Calu3 (cell line): ENCODE measurements at regions of chr2 and their contacts with region 1.

Region 1: GRCh38 chr2:156332534-156333273 is at the start of gene NR4A2:
- DNase-seq: peak; percentile 89
- H3K4me3 Mint-ChIP-seq: peak within 1 kb of the TSS; percentile 92
- H3K27ac Mint-ChIP-seq: peak within 1 kb of the TSS; percentile 97
- H3K4me1 Mint-ChIP-seq: peaks cover 9% of the 10 kb centered on the region
- H3K27me3 Mint-ChIP-seq: no peaks in the 10 kb centered on the region
- CTCF ChIP-seq: no peak
- total RNA-seq, gene NR4A2: 4.9 and 6.2 TPM in 2 replicates

Region 2: GRCh38 chr2:155708071-155708470 is 624.6 kb before region 1 on chr2:
- CTCF ChIA-PET with region 1: no interaction called
- intact Hi-C with region 1: loop called (anchors 10 kb)
- DNase-seq: peak; percentile 3
- H3K4me3 Mint-ChIP-seq: no peak overlapping the region
- H3K27ac Mint-ChIP-seq: no peak overlapping the region
- H3K4me1 Mint-ChIP-seq: no peaks in the 10 kb centered on the region
- H3K27me3 Mint-ChIP-seq: no peaks in the 10 kb centered on the region
- CTCF ChIP-seq: no peak

Region 3: DNA sequence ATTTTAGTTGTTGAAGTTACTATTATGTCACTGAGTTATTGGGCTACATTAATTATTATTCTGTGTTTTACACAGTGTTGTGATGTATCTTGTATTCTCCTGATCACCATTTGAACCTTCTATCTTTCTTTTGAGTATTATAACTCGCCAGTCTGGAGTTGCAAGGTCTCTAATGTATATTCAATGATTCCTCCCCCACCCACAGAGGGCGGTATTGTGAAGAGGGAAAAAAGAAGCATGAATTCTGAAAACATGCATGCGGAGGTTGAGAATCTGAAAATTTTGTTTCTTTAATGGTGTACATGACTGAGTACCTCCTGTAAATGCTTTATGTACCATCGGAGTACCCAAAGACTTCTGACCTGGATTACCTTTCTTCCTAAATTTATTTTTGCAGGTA is 266.8 kb before region 1 on chr2:
- CTCF ChIA-PET with region 1: no interaction called
- intact Hi-C with region 1: loop called (anchors 5 kb)
- DNase-seq: peak; percentile 58
- H3K4me3 Mint-ChIP-seq: no peak overlapping the region
- H3K27ac Mint-ChIP-seq: no peak overlapping the region
- H3K4me1 Mint-ChIP-seq: no peaks in the 10 kb centered on the region
- H3K27me3 Mint-ChIP-seq: no peaks in the 10 kb centered on the region
- CTCF ChIP-seq: peak; percentile 36

Region 4: DNA sequence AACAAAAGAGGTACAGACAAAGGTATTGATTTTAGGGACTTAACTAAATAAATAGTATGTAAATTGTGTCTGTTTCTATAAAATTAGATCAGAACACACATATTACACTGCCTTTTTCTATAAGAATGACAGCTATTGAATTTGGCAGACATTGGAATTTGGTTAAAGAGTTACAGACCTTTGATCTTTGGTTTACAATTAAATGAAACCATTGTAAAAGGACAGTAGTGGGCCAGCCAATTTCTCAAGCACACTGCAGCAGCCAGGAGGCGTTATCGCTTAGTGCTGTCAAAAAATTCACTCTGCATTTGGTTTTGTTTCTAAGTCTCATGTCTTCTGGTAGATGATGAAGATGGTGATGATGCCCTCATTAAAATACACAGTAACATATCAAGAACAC is 176.1 kb before region 1 on chr2:
- CTCF ChIA-PET with region 1: no interaction called
- intact Hi-C with region 1: loop called (anchors 5 kb)
- DNase-seq: peak; percentile 21
- H3K4me3 Mint-ChIP-seq: no peak overlapping the region
- H3K27ac Mint-ChIP-seq: no peak overlapping the region
- H3K4me1 Mint-ChIP-seq: no peaks in the 10 kb centered on the region
- H3K27me3 Mint-ChIP-seq: no peaks in the 10 kb centered on the region
- CTCF ChIP-seq: no peak

Region 5: DNA sequence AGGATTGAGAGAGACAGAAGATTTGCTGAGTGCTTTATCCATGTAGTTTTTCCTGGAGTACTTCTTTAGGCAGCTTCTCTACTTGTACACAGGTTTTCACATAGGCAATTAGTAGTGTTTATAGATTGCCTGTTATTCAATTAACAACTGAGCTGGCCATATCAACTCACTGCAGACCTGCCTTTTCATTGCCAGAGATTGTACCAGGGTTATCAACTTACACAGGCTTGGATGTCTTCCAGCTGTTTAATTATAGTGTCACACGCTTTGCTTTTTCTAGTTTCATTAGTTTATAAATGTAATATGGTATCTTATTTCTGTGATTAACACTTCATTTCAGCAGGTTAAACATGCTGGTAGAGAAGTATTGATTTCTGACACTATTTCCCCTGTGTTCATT is 229.4 kb after region 1 on chr2:
- CTCF ChIA-PET with region 1: no interaction called
- intact Hi-C with region 1: loop called (anchors 5 kb)
- DNase-seq: no peak
- H3K4me3 Mint-ChIP-seq: no peak overlapping the region
- H3K27ac Mint-ChIP-seq: no peak overlapping the region
- H3K4me1 Mint-ChIP-seq: no peaks in the 10 kb centered on the region
- H3K27me3 Mint-ChIP-seq: no peaks in the 10 kb centered on the region
- CTCF ChIP-seq: no peak

Region 6: DNA sequence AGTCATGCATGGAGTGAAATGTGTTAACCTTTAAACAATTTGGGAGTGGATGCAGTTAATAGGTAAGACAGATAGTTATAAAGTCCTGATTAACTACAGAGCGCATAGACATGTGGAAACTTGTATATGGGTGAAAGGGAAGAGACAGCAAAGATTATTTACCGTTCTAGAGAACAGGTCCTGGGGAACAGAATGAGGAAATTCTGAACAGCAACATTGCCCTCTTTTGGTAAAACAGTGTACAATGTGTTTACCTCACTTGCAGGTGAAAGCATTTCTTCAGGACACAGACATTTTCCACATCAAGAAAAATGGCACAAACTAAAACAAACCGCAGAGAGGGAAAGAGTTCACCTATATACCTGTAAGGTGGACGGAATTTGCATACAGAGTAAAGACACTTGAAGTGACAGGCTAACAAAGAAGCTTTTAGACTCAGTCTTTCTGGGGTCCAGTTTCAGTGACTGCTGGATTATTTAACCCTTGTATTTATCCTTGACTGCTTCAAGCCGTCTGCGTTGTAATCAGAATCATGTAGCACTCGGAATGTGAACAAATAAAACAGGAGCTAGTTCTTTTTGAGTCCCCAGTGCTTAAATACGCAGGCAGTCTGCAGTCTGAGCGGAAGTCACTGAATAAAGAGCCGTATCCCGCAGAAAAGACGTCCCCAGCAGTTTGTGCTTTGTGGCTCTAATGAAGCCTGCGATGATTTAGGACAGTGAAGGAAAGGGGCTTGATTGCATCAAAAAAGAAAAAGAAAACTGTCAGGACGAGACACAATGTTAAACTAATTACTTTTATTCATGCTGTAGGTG is 560.0 kb after region 1 on chr2:
- CTCF ChIA-PET with region 1: no interaction called
- intact Hi-C with region 1: loop called (anchors 2 kb)
- DNase-seq: peak; percentile 23
- H3K4me3 Mint-ChIP-seq: peak overlapping the region; percentile 67
- H3K27ac Mint-ChIP-seq: peak overlapping the region; percentile 29
- H3K4me1 Mint-ChIP-seq: peaks cover 20% of the 10 kb centered on the region
- H3K27me3 Mint-ChIP-seq: no peaks in the 10 kb centered on the region
- CTCF ChIP-seq: peak; percentile 18

Region 7: GRCh38 chr2:157257312-157258252 is 924.9 kb after region 1 on chr2 and contains the start of gene GALNT5:
- CTCF ChIA-PET with region 1: no interaction called
- intact Hi-C with region 1: loop called (anchors 10 kb)
- DNase-seq: peak; percentile 25
- H3K4me3 Mint-ChIP-seq: peak within 1 kb of the TSS; percentile 95
- H3K27ac Mint-ChIP-seq: peak within 1 kb of the TSS; percentile 91
- H3K4me1 Mint-ChIP-seq: peaks cover 55% of the 10 kb centered on the region
- H3K27me3 Mint-ChIP-seq: no peaks in the 10 kb centered on the region
- CTCF ChIP-seq: no peak
- total RNA-seq, gene GALNT5: 51.7 and 95.4 TPM in 2 replicates